ENCODE measurements at regions of chr1 and their contacts with region 1.

Region 1: DNA sequence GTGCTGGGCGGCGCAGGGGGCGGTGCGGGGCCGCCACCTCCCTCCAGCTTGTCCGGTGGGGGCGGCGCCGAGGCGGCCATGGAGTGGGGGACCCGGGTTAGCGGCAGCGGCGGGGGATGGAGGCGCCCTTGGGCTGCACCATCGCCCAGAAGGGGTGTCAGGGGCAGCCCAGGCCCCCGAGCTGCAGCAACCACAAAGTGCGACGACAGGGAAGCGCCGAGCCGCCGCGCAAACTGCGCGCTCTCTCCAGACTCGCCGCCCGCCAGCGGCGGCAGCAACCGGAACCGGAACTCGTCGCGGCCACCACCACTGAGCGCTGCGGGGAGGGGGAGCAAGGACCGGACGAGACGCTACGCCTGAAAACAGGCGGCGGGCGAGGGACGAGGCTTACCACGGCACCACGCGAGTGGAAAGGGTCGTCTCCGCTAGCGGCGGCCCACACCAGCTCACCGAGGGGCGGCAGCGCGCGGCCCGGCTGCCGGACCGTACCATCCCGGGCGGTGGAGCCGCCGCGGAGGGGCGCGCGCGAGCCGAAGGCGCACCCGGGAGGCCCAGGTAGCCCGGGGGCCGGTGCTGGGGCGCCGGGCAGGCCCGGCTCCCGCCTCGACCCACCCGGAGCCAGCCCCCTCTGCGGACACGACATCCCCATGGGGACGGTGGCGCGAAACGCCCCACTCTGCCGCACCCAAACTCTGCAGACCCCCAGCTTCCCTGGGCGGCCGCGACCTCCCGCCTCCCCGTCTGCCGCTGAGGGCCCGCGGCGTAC is at the start of gene PYGO2:
- DNase-seq: peak; percentile 66
- ATAC-seq: peak; percentile 86
- H3K4me3 ChIP-seq: peak within 1 kb of the TSS; percentile 86
- H3K27ac ChIP-seq: peak within 1 kb of the TSS; percentile 96
- H3K4me1 ChIP-seq: peaks cover 9% of the 10 kb centered on the region
- H3K27me3 ChIP-seq: no peaks in the 10 kb centered on the region
- CTCF ChIP-seq: peak; percentile 69
- POLR2A ChIP-seq: peak; percentile 40
- RAD21 ChIP-seq: peak; percentile 62
- total RNA-seq, gene PYGO2: 5.3 and 5.4 TPM in 2 replicates

Region 2: DNA sequence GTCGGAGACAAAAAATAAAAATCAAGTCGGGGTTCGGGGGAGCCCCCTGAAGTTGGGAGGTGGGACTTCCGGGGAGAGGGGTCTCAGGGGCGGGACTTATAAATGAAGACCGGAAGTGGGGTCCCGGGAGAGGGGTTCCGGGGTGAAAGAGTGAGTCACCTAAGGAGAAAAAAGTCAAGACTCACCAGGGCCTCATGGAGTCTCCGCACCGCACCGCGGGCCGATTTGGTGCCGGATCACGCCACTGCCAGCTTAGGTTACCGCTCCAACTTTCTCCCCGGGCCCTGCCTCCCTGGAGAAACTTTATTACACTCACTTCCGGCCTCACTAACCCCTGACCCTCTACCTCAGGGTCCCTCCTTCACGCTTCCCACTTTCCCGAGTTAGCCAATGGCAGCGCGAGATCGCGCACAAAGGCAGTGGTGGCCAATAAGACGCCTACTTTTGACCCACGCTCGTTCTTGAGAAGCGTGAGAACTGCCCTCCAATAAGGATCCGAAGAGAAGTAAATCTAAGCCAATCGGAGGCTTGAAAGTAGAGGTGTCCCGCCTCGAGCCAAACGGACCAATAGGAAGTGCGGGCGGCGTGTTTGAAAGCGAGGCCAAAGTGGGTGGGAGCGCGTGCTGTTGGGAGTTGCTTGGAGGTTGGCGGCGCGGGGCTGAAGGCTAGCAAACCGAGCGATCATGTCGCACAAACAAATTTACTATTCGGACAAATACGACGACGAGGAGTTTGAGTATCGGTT is 12.6 kb after region 1 on chr1 and contains the start of gene CKS1B:
- CTCF ChIA-PET with region 1: interaction called, 3 read pairs
- POLR2A ChIA-PET with region 1: interaction called, 17 read pairs
- dilution Hi-C with region 1: no loop called
- in situ Hi-C with region 1: no loop called
- intact Hi-C with region 1: no loop called
- DNase-seq: peak; percentile 100
- ATAC-seq: peak; percentile 62
- H3K4me3 ChIP-seq: peak within 1 kb of the TSS; percentile 57
- H3K27ac ChIP-seq: peak within 1 kb of the TSS; percentile 89
- H3K4me1 ChIP-seq: peaks cover 11% of the 10 kb centered on the region
- H3K27me3 ChIP-seq: no peaks in the 10 kb centered on the region
- CTCF ChIP-seq: no peak
- POLR2A ChIP-seq: peak; percentile 84
- RAD21 ChIP-seq: no peak
- total RNA-seq, gene CKS1B: 129 and 140 TPM in 2 replicates